GM12878 (cell line): ENCODE measurements at regions of chr1 and their contacts with region 1.

Region 1: GRCh38 chr1:61588736-61589672 is 135.9 kb downstream of the TM2D1 start:
- DNase-seq: peak; percentile 3
- ATAC-seq: peak; percentile 100
- H3K4me3 ChIP-seq: no peak overlapping the region
- H3K27ac ChIP-seq: no peak overlapping the region
- H3K4me1 ChIP-seq: no peaks in the 10 kb centered on the region
- H3K27me3 ChIP-seq: no peaks in the 10 kb centered on the region; a peak in 1 of 4 replicates
- CTCF ChIP-seq: peak; percentile 86 to 90 (median 87)
- EP300 ChIP-seq: no peak
- POLR2A ChIP-seq: no peak
- RAD21 ChIP-seq: peak; percentile 85

Region 2: GRCh38 chr1:60848583-60849188 is 740.3 kb before region 1 on chr1:
- CTCF ChIA-PET with region 1: interaction called, 5 read pairs
- POLR2A ChIA-PET with region 1: no interaction called
- RAD21 ChIA-PET with region 1: interaction called, 3 read pairs
- SMC1A ChIA-PET with region 1: interaction called, 4 read pairs
- in situ Hi-C with region 1: no loop called
- intact Hi-C with region 1: loop called (anchors 1 kb)
- DNase-seq: no peak
- ATAC-seq: peak; percentile 15; the same call in 1 of the 3 replicates
- H3K4me3 ChIP-seq: no peak overlapping the region
- H3K27ac ChIP-seq: no peak overlapping the region
- H3K4me1 ChIP-seq: no peaks in the 10 kb centered on the region
- H3K27me3 ChIP-seq: no peaks in the 10 kb centered on the region
- CTCF ChIP-seq: peak; percentile 23 to 42 (median 37); a peak in 5 of 6 replicates
- EP300 ChIP-seq: no peak
- POLR2A ChIP-seq: no peak
- RAD21 ChIP-seq: peak; percentile 53

Region 3: DNA sequence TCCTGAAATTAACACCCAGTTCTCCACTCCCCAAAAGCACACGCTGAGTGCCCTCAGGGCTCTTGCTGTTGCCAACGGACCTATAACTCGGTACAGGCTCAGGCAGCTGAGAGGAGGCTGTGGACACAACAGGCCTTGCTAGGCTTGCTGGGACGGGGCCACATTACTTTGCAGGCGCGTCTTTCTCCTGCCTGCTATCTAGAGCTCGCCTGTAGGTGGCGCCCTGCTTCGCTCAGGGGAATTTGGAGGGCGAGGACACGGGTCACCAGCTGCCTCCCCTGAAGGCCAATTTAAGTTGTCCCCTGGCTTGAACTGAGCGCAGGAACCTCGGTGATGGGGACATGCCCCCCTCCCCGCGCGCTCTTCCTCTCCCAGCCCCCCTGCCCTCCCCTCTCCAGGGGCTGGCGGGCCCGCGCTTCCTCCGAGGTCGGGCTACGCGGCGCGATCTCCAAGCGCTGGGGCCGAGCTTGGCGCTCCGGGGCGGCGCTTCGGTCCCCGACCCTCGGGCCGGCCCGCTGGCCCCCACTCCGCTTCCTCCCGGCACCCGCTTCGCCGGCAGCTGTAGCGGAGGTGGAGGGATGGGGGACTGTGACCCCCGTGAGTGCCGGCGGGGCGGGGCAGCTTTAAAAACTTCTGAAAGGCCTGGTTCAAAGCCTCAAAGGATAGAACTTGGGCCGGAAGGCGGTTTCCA is 539.0 kb before region 1 on chr1:
- CTCF ChIA-PET with region 1: interaction called, 10 read pairs
- POLR2A ChIA-PET with region 1: no interaction called
- RAD21 ChIA-PET with region 1: interaction called, 5 read pairs
- SMC1A ChIA-PET with region 1: interaction called, 6 read pairs
- in situ Hi-C with region 1: no loop called
- intact Hi-C with region 1: loop called (anchors 5 kb)
- DNase-seq: no peak
- ATAC-seq: peak; percentile 89
- H3K4me3 ChIP-seq: peak overlapping the region; percentile 32; the same call in 1 of the 2 replicates
- H3K27ac ChIP-seq: no peak overlapping the region
- H3K4me1 ChIP-seq: no peaks in the 10 kb centered on the region
- H3K27me3 ChIP-seq: peaks cover 5 to 22% of the 10 kb centered on the region in 2 experiments
- CTCF ChIP-seq: peak; percentile 75 to 80 (median 79)
- EP300 ChIP-seq: no peak
- POLR2A ChIP-seq: no peak
- RAD21 ChIP-seq: peak; percentile 62

Region 4: GRCh38 chr1:61362351-61362750 is 226.7 kb before region 1 on chr1:
- CTCF ChIA-PET with region 1: no interaction called
- POLR2A ChIA-PET with region 1: no interaction called
- RAD21 ChIA-PET with region 1: no interaction called
- SMC1A ChIA-PET with region 1: no interaction called
- in situ Hi-C with region 1: no loop called
- intact Hi-C with region 1: no loop called
- DNase-seq: no peak
- ATAC-seq: no peak
- H3K4me3 ChIP-seq: no peak overlapping the region
- H3K27ac ChIP-seq: no peak overlapping the region
- H3K4me1 ChIP-seq: no peaks in the 10 kb centered on the region
- H3K27me3 ChIP-seq: no peaks in the 10 kb centered on the region; a peak in 2 of 4 replicates
- CTCF ChIP-seq: no peak
- EP300 ChIP-seq: no peak
- POLR2A ChIP-seq: no peak
- RAD21 ChIP-seq: no peak

Region 5: DNA sequence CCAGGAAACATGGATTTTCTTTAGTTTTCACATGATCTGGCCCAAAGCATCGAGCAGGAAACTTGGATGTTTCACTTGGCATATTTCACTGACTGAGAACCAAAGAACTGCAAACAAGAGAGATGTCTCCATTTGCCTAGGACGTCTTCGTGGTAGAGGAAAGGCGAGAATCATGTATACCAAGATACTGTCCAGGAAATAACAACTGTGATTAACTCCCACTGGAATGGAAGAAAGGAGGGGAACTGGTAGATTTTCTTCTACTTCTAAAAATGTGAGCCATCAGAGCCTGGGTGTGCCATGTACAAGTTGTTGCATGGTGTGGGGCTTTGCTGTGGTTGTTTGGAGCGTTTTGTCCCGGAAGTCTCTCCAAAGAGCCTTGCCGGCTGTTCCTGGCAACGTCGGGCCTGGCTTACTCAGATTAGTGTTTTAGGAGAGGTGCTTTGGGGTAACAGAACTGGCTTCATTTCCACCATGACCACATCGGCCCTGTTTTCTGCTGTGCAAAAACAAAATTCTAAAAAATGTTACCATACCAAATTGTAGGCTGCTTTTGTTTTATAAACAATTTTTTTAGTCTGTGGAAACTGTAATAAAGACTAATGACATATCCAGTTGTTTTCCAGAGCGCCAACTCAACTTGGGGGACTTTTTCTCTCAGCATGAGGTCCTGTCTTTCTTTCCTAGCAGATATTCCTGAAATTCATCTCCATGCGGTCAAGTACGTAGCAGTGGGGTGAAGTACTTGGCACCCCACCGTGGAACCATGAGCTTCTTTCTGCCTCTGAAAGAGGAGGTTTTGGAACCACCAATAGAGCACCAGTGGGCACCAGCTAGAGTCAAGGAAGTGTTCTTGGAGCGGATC is 17.7 kb after region 1 on chr1:
- CTCF ChIA-PET with region 1: interaction called, 13 read pairs
- POLR2A ChIA-PET with region 1: no interaction called
- RAD21 ChIA-PET with region 1: no interaction called
- SMC1A ChIA-PET with region 1: no interaction called
- in situ Hi-C with region 1: no loop called
- intact Hi-C with region 1: no loop called
- DNase-seq: no peak
- ATAC-seq: no peak
- H3K4me3 ChIP-seq: no peak overlapping the region
- H3K27ac ChIP-seq: no peak overlapping the region
- H3K4me1 ChIP-seq: no peaks in the 10 kb centered on the region
- H3K27me3 ChIP-seq: no peaks in the 10 kb centered on the region; a peak in 1 of 4 replicates
- CTCF ChIP-seq: no peak
- EP300 ChIP-seq: no peak
- POLR2A ChIP-seq: no peak
- RAD21 ChIP-seq: no peak

Region 6: DNA sequence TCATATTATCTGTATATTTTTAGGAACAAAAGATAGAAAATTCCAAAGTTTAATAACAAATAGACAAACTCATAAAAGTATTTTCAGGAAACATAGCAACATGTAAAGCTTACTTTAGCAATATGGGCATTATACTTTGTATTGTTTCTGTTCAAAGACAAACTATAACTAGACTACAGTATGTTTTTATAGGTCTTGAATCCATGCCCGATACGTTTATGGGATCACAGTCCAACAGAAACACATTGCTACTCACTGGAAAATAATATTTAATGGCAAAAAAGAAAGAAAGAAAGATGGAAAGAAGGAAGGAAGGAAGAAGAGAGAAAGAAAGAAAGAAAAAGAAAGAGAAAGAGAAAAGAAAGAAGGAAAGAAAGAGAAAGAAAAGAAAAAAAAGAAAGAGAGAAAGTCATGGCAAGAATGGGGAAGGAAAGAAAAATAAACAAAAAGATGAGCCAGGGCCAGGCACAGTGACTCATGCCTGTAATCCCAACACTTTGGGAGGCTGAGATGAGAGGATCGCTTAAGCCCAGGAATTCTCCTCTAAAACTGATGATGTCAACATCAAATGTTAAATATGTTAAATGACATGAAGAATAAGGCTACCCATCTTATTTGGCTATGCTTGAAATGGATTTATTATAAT is 103.3 kb after region 1 on chr1:
- CTCF ChIA-PET with region 1: no interaction called
- POLR2A ChIA-PET with region 1: no interaction called
- RAD21 ChIA-PET with region 1: no interaction called
- SMC1A ChIA-PET with region 1: no interaction called
- in situ Hi-C with region 1: no loop called
- intact Hi-C with region 1: no loop called
- DNase-seq: no peak
- ATAC-seq: no peak
- H3K4me3 ChIP-seq: no peak overlapping the region
- H3K27ac ChIP-seq: no peak overlapping the region
- H3K4me1 ChIP-seq: no peaks in the 10 kb centered on the region
- H3K27me3 ChIP-seq: no peaks in the 10 kb centered on the region
- CTCF ChIP-seq: no peak
- EP300 ChIP-seq: no peak
- POLR2A ChIP-seq: no peak
- RAD21 ChIP-seq: no peak

Region 7: GRCh38 chr1:61851849-61852669 is 263.1 kb after region 1 on chr1:
- CTCF ChIA-PET with region 1: interaction called, 11 read pairs
- POLR2A ChIA-PET with region 1: no interaction called
- RAD21 ChIA-PET with region 1: interaction called, 5 read pairs
- SMC1A ChIA-PET with region 1: interaction called, 9 read pairs
- in situ Hi-C with region 1: no loop called
- intact Hi-C with region 1: loop called (anchors 1 kb)
- DNase-seq: no peak
- ATAC-seq: peak; percentile 84
- H3K4me3 ChIP-seq: no peak overlapping the region
- H3K27ac ChIP-seq: no peak overlapping the region
- H3K4me1 ChIP-seq: no peaks in the 10 kb centered on the region
- H3K27me3 ChIP-seq: no peaks in the 10 kb centered on the region
- CTCF ChIP-seq: peak; percentile 60 to 78 (median 67)
- EP300 ChIP-seq: no peak
- POLR2A ChIP-seq: no peak
- RAD21 ChIP-seq: peak; percentile 90